ENCODE measurements at regions of chr6 and their contacts with region 1.

Region 1: DNA sequence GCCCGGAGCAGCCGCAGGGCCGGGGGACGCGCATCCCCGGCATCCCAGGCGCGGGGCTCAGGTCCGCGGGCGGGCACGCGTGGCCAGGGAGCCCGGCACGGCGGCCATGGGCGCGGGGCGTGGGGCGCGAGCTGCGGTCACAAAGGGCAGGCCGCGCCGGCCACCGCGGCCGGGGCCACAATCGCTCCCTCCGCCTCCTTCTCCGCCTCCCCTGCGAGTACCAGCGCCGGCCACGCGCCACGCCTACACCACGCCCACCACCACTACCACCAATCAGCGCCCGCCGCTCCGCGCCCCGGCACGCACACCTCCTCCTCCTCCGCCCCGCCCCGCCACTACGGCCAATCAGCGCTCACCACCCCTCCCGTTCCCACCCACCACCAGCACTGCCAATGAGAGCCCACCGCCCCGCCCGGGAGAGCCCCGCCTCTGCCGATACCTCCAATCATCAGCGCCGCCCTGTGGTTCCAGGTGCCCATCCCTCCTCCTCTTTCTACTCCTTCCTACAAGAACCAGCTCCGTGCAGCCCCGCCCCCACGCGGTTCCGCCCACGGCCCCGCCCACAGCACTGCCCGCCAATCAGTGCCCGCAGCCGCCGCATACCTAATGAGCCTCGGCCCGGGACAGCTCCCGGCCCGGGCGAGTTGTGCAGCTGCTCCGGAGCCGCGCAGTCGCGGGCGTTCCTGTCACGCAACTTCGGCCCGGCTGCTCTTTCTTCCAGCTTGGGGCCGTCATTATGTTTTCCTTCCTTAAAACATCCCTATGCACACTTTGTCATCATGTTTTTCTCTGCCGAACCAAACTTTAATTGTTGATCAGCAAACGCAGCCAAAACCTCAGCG is at the start of gene RPS6KA2:
- DNase-seq: peak; percentile 98
- H3K4me3 ChIP-seq: peak within 1 kb of the TSS; percentile 70
- H3K27ac ChIP-seq: no peak within 1 kb of the TSS
- H3K4me1 ChIP-seq: peaks cover 6% of the 10 kb centered on the region
- CTCF ChIP-seq: no peak
- total RNA-seq, gene RPS6KA2: 0.69 and 1.6 TPM in 2 replicates

Region 2: DNA sequence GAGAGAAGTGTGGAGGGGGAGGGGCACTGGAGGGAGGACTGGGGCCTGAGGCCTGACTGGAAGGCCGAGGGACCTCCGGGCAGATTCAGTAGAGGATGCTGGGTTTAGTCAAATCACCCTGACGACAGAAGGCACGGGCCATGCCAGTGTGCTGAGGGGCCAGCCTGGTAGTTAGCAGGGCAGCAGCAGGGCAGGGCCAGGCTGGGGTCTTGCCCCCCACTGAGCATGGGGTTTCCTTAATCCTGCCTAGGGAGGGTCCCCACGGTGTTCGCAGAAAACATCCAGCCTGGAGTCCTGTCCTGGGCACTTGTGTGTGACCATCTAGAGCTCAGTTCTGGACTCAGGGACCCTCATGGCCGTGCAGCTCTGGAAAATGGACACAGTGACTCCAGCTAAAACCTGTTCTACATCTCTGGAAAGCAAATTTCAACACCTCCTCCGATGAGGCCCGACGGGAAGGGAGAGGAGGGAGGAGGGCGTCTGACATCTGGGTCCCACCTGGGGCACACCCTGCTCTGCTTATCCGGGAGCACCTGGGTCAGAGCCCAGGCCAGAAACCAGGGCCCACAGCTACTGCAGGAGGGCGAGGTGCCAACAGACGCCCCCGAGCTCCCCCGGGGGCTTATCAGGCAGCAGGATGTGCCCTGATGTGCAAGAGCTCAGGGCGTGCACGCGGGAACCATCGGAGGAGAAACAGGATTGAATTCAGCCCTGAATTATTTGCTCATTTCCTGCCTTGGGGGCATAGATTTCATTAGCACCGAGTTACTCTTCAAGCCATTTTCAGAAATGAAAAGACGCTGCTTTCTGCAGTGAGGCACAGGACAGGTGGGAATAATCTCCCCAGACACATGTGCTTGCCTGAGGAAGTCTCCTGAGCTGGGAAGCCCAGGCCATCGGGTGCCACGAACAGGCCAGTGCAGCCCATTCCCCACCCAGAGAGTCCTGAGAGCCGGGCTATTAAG is 166.5 kb before region 1 on chr6:
- CTCF ChIA-PET with region 1: no interaction called
- POLR2A ChIA-PET with region 1: interaction called, 3 read pairs
- intact Hi-C with region 1: loop called (anchors 2 kb)
- DNase-seq: peak; percentile 34
- H3K4me3 ChIP-seq: no peak overlapping the region
- H3K27ac ChIP-seq: no peak overlapping the region
- H3K4me1 ChIP-seq: peaks cover 33% of the 10 kb centered on the region
- CTCF ChIP-seq: no peak

Region 3: GRCh38 chr6:166586424-166587156 is 40.7 kb before region 1 on chr6 and contains the start of gene RAMACL:
- CTCF ChIA-PET with region 1: interaction called, 7 read pairs
- POLR2A ChIA-PET with region 1: interaction called, 6 read pairs
- intact Hi-C with region 1: loop called (anchors 1 kb)
- DNase-seq: peak; percentile 88
- H3K4me3 ChIP-seq: no peak within 1 kb of the TSS
- H3K27ac ChIP-seq: peak within 1 kb of the TSS; percentile 93
- H3K4me1 ChIP-seq: peaks cover 35% of the 10 kb centered on the region
- CTCF ChIP-seq: no peak
- total RNA-seq, gene RAMACL: 0.41 TPM in 1 of 2 replicates, not detected in the other